Panc1 (cell line): ENCODE measurements at regions of chr19 and their contacts with region 1.

Region 1: GRCh38 chr19:39846176-39846677 is at the start of gene FBL:
- DNase-seq: peak; percentile 100
- ATAC-seq: peak; percentile 91
- H3K4me3 ChIP-seq: peak within 1 kb of the TSS; percentile 35 to 52
- H3K27ac ChIP-seq: peak within 1 kb of the TSS; percentile 83
- H3K4me1 ChIP-seq: peaks cover 60% of the 10 kb centered on the region
- H3K27me3 ChIP-seq: no peaks in the 10 kb centered on the region
- CTCF ChIP-seq: no peak
- total RNA-seq, gene FBL: 4,927 TPM

Region 2: DNA sequence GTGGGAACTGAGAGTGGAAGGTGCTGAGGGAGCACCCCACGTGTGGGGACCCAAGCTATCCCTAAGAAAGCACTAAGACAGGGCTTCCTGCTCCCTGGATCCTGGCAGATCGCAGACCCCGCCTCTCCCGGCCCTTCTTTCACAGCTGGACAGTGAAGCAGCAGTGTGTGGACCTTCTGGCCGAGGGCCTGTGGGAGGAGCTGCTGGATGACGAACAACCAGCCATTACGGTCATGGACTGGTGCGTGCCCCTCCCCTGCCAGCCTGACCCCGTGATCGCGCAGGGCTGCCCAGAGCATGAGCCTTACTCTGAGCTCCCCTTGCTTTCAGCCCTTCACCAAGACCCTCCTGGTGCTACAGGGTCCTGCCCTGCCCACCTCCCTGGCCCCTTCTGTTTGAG is 647.2 kb before region 1 on chr19:
- CTCF ChIA-PET with region 1: no interaction called
- POLR2A ChIA-PET with region 1: interaction called, 12 read pairs
- in situ Hi-C with region 1: no loop called
- intact Hi-C with region 1: no loop called
- DNase-seq: no peak
- ATAC-seq: peak; percentile 19
- H3K4me3 ChIP-seq: no peak overlapping the region
- H3K27ac ChIP-seq: no peak overlapping the region
- H3K4me1 ChIP-seq: peaks cover 13% of the 10 kb centered on the region
- H3K27me3 ChIP-seq: peaks cover 3% of the 10 kb centered on the region; the same call in 1 of the 2 replicates
- CTCF ChIP-seq: no peak

Region 3: DNA sequence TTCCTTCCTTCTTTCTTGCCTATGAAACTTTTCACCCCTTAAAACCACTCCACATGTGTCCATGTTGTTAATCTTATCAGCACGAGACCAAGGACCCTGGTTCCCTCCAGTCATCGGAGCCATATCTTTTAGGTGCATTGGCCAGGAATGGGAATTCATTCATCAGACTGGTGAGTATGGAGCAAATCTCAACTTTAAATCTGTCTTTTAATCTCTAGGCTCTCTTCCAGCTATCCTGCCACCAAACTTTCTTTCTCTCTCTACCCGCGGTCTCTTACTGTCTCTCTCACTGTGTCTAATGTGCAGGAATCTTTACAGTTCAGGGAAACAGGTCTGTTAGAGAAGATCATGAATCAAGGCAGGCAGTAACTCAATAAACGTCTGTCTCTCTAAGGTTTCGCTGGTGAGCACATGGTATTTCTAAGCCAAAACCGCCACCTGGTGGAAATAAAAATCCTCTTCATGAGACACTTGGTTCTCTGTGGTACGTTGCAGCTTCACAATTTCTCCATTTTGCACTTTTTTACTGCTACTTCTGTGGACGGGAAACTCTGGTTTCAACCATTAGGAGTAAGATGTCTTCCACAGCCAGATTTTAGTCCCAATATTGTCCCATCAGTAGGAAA is 174.4 kb before region 1 on chr19:
- CTCF ChIA-PET with region 1: interaction called, 57 read pairs
- POLR2A ChIA-PET with region 1: no interaction called
- in situ Hi-C with region 1: loop called (anchors 5 kb)
- intact Hi-C with region 1: loop called (anchors 1 kb)
- DNase-seq: peak; percentile 100
- ATAC-seq: peak; percentile 95
- H3K4me3 ChIP-seq: no peak overlapping the region
- H3K27ac ChIP-seq: no peak overlapping the region
- H3K4me1 ChIP-seq: peaks cover 11% of the 10 kb centered on the region
- H3K27me3 ChIP-seq: peaks cover 57% of the 10 kb centered on the region
- CTCF ChIP-seq: no peak

Region 4: GRCh38 chr19:39818626-39819097 is 27.6 kb before region 1 on chr19:
- CTCF ChIA-PET with region 1: interaction called, 22 read pairs
- POLR2A ChIA-PET with region 1: interaction called, 6 read pairs
- in situ Hi-C with region 1: no loop called
- intact Hi-C with region 1: no loop called
- DNase-seq: no peak
- ATAC-seq: 0 out of 2 replicates have a peak, but pooled peaks have one; percentile 0
- H3K4me3 ChIP-seq: no peak overlapping the region
- H3K27ac ChIP-seq: no peak overlapping the region
- H3K4me1 ChIP-seq: peaks cover 4% of the 10 kb centered on the region
- H3K27me3 ChIP-seq: no peaks in the 10 kb centered on the region
- CTCF ChIP-seq: no peak

Region 5: DNA sequence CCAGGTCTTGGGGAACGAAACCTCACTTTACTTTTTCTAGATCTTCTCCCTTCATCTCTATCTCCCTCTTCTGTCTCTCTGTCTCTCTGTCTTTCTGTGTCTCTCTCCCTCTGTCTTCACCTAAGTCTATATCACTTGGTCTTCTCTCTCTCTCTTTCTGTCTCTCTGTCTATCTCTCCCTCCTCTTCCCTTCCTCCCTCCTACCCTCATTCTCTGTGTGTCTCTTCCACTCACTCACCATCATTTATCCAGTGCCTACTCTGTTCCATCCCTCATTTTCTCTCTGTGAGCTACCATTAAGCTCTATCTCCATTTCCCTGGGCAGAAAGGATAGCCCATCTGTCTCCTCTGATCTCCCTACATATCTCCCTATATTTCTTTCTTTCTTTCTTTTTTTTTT is 32.2 kb after region 1 on chr19:
- CTCF ChIA-PET with region 1: interaction called, 11 read pairs
- POLR2A ChIA-PET with region 1: interaction called, 9 read pairs
- in situ Hi-C with region 1: loop called (anchors 5 kb)
- intact Hi-C with region 1: no loop called
- DNase-seq: no peak
- ATAC-seq: no peak
- H3K4me3 ChIP-seq: no peak overlapping the region
- H3K27ac ChIP-seq: no peak overlapping the region
- H3K4me1 ChIP-seq: no peaks in the 10 kb centered on the region
- H3K27me3 ChIP-seq: no peaks in the 10 kb centered on the region
- CTCF ChIP-seq: no peak

Region 6: GRCh38 chr19:40025938-40026596 is 179.8 kb after region 1 on chr19:
- CTCF ChIA-PET with region 1: no interaction called
- POLR2A ChIA-PET with region 1: no interaction called
- in situ Hi-C with region 1: loop called (anchors 5 kb)
- intact Hi-C with region 1: no loop called
- DNase-seq: no peak
- ATAC-seq: no peak
- H3K4me3 ChIP-seq: no peak overlapping the region
- H3K27ac ChIP-seq: no peak overlapping the region
- H3K4me1 ChIP-seq: no peaks in the 10 kb centered on the region
- H3K27me3 ChIP-seq: no peaks in the 10 kb centered on the region
- CTCF ChIP-seq: no peak

Region 7: GRCh38 chr19:40341601-40342482 is 495.6 kb after region 1 on chr19:
- CTCF ChIA-PET with region 1: no interaction called
- POLR2A ChIA-PET with region 1: no interaction called
- in situ Hi-C with region 1: loop called (anchors 5 kb)
- intact Hi-C with region 1: no loop called
- DNase-seq: no peak
- ATAC-seq: peak; percentile 67
- H3K4me3 ChIP-seq: no peak overlapping the region
- H3K27ac ChIP-seq: no peak overlapping the region
- H3K4me1 ChIP-seq: no peaks in the 10 kb centered on the region
- H3K27me3 ChIP-seq: peaks cover 2% of the 10 kb centered on the region; the same call in 1 of the 2 replicates
- CTCF ChIP-seq: no peak